ENCODE measurements at regions of chr1 and their contacts with region 1.

Region 1: DNA sequence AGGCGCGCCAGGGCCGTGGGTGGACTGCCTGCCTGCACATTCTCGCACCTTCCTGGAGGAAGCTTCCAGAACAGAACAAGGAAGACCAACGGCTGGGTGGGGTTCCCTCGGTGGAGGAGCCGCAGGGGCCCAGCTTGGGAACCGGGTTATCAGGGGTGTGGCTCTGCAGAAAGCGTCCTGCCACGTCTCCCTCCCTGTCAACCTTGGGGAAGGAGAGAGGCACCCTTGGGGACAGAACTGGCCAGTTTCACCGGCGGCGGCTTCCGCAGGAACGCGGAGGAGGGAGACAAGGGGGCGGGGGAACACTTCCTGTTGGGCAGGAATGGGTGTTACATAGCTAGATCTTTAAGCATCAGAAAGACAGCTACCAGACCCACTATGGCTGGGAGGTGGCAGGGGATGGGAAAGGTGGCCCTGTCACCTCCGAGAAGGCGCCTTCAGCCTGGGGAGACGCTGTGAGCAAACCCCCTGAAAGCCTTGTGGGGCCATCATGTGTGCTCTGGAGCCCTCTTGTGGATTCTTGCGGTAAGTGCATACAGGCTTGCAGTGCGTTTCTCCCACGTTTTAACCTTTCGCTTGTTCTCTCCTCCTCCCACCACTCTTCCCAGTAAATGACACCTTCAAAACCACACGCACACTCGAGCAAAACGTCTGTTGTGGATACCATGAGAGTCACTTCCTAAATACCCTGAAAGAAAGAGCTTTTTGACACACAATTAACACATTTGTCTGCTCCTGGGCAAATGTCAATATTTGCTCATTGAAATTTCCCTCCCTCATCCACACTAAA is 3.8 kb upstream of the PLEKHA6 start:
- DNase-seq: peak; percentile 74 to 88
- ATAC-seq: peak; percentile 85

Region 2: DNA sequence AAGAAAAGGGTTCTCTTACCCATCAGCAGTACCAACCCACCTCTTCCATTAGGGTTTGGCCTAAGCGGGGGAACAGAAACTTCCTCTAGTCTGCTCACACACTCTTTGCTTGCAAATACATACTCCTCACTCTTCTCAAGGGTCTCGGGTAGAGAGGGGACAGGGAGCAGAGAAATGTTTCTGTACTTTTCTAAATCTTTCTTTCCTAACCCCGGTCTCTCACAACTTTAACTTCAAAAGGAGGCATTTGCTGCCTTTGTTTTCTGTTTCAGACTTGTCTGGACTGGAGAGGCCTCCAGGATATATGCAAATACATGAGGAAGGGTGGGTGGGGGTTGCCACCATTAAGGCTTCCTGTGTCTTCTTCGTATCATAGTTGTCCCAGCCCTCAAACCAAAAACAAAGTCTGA is 609.1 kb before region 1 on chr1:
- intact Hi-C with region 1: no loop called
- DNase-seq: no peak
- ATAC-seq: no peak

Region 3: DNA sequence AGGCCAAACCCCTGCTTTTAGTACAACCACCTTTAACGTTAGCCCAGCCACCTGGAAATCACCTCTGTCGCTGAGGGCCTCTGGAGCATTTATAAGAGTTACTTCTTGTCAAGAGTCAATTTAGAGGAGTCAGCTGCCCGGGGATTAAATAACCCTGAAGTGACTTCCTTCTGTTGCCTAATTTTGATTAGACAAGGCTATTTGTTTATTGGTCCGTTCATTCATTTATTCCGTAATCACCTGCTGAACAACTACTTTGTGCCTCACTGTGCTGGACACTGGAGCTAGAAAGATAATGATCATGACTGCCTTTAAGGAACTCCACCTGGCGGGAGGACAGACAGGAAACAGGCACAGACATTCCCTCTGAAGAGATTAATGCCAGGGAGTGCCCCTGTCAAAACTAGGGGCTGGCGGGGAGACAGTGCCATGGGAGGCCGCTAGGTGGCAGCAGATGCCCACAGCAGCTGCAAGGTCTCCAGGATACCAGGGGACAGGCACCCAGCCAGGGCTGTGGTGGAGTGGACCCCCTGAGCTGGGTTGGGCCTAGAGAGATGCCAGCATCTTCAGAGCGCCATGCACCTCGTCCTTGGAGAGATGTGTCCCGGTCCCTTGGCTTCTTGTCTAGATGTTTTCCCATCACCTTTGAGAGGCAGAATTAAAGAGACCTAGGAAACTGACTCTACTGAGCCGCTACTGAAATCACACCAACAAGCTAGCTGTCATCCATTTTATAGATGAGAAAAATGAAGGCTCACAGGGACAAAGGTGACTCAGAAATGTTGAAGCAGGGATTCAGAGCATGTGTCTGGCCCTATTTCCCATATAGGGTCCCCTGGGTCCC is 201.1 kb before region 1 on chr1:
- intact Hi-C with region 1: loop called (anchors 5 to 10 kb)
- DNase-seq: peak; percentile 73 to 85
- ATAC-seq: peak; percentile 93

Region 4: DNA sequence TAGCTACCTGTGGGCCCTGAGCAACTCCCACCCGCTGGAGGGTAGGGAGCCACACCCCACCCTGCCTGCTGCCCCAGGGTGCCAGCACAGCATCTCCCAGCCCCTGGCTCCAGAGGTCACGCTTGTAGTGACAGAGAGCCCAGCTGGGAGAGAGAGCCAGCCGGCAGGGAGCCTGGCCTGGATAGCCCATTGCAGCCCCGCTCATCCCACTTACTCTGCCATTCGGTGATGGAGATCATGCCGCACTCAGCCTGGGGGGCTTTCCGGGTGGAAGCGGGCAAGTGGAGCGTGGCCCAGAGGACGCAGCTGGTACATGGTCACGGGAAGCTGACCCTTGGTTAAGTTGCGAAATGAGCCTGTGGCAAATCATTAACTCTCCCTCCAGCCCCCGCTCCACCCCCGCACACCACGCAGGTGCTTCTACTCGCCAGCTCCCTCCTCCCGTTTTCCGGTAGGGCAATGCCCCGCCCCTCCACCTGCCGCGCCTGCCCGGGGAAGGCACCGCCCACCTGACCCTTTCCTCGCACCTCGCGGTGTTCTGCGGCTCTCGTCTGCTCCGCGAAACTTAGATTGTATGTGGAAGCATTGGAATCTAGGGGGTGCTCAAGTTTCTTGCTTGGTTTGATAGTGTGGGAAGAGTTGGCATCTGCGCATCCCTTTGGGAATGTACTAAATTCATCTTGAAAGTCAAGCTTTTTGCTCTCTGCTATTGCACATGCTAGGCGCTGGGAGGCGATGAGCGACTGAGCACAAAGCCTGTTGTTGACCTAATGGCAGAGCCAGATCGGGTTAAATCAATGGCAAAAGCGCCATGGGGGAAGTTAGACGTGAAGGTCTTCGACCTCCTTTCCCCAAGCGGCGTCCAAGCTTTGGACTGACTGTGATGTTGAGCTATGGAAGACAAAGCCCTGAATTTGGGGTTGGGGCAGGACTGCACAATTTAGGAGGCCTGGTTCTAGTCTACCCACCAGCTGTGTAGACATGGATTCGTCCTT is 149.6 kb before region 1 on chr1 and contains the start of gene GOLT1A:
- intact Hi-C with region 1: loop called in 1 of 2 experiments (anchors 5 kb)
- DNase-seq: peak; percentile 86 to 90
- ATAC-seq: peak; percentile 94
- total RNA-seq, gene GOLT1A: 5.3 to 6.5 TPM

Region 5: DNA sequence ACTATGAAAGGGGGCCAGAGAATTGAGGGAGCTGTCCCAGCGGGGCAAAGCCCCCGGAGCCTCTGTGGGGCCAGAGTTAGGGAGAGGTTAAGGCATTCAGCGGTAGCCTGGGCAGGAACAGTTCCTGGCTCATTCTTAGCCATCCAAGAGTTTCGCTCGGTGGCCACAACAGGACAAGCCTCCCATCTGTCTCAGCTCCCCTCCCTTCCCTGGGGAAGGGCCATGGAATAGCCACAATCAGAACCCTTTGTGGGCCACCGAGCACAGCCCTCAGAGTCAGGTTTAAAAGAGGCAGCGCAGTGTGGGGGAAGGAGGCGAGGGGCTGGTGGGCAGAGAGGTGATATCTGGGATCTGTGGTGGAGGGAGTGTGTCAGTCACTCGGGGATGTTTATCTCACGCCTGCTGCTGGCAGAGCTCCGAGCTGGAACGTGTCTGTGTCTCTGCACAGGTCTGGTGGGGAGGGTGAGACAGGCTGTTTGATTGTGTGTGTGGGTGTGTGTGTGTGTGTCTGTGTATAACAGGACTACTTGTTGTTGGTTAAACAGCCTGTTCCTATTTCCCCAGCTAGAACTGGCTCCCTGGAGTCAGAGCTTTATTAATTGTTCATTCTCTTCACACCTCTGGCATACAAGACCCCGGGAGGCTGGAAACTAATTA is 100.1 kb before region 1 on chr1:
- intact Hi-C with region 1: loop called (anchors 5 to 10 kb)
- DNase-seq: no peak
- ATAC-seq: no peak

Region 6: DNA sequence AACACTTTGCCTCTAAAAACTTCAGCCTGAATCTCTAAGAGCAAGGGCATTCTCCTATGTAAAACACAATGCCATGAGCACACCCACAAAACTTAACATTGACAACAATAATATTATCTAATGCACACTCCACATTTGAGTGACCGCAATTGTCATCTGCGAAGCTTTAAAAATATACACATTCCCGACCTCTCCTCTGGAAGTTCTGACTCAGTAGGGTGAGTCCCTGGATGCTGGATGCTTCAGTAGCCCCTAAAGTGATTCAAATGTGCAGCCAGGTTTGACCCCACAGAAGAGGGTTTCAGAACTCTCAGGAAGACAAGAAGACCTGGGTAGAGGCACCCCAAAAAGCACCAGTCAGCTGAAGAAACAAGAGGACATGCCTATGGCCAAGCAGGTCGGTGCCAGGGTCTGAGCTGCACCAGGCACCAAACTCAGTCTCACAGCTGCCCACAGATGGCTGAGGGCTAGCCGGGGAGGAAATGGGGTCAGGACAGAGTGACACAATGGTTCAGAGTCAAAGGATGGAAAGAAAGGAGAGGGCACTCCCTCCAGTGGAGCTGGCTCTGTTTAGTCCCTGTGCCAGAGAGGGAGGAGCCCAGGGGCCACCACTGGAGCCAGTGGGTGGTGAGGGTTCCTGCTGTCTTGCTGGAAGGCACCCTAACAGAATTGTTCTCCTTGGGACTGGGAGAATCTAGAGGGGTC is 113.7 kb after region 1 on chr1:
- intact Hi-C with region 1: no loop called
- DNase-seq: peak; percentile 47 to 59
- ATAC-seq: peak; percentile 72

Measured in left colon (tissue), 2 donors.